MCF 10A (cell line): ENCODE measurements at regions of chr3 and their contacts with region 1.

Region 1: DNA sequence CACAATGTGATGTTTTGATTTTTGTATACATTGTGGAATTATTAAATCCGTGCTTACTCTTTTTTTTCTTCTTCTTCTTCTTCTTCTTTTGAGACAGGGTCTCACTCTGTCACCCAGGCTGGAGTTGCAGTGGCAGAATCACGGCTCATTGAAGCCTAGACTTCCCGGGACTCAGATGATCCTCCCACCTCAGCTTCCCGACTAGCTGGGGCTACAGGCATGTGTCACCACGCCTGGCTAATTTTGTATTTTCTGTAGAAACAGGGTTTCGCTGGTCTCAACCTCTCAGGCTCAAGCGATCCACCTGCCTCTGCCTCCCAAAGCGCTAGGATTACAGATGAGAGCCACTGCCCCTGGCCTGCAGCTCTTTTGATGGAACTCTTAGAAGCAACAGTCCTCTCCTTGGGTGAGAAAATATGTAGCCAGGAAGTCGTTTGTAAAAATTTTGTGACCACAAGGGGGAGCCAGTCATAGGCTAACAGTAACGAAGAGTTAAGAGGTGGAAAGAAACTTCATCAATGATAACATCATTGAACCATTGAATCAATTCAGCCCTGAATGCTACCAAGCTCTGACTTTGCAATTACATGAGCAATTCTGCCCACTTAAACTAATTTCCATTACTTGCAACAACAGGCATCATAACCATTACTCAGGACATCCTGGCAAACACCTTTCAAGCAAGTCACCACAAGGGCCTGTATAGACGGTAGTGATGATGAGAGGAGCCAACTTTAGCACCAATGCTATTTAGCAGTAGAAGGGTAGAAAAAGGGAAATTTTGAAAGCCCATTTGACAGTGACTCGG is 16.7 kb upstream of the CMTM7 start:
- DNase-seq: peak; percentile 79
- H3K4me3 Mint-ChIP-seq: no peak overlapping the region
- H3K27ac Mint-ChIP-seq: no peak overlapping the region
- H3K4me1 Mint-ChIP-seq: no peaks in the 10 kb centered on the region
- H3K27me3 Mint-ChIP-seq: no peaks in the 10 kb centered on the region
- CTCF ChIP-seq: peak; percentile 71

Region 2: DNA sequence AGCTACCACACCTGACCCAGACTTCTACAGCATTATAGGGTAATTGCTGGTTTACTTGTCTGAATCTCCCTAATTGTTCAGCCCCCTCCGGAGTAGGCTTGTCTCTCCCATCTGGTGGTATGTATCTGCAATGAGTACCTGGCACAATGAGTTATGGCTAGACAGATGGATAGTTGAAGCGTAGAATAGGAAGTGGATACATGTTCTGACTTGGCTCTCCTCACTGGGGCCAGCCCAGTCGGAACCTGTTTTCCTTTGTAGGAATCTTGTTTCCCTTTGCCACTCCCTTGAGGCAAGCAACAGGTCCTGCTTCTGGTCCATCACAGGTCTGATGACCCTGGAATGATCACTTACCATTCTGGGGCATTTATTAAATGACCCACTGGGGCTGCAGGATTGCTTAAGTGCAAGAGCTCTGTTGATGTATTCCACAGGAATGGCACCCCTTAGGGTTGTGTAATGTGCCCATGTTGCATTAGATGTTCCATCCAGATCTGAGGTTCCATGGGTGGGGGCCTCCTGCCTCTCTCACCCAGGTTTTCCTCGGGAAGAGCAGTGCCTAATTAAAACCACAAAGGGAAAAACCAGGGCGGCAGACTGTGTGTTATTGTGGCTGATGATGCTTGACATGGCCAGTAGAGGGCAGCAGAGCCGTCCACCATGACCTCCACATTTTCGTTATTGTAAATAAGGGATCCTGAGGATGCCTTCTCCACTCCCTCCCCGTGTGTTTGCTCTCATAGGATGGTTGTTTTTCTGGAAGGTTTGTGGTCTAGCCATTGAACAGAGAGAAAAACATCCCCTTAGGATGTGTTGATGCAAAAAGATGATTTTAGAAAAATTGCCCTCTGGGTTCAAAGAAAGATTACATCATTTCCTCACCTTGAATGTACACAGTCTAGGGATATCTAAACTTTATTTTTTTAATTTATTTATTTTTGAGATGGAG is 78.5 kb before region 1 on chr3:
- CTCF ChIA-PET with region 1: interaction called, 20 read pairs
- POLR2A ChIA-PET with region 1: no interaction called
- intact Hi-C with region 1: no loop called
- DNase-seq: peak; percentile 70
- H3K4me3 Mint-ChIP-seq: no peak overlapping the region
- H3K27ac Mint-ChIP-seq: no peak overlapping the region
- H3K4me1 Mint-ChIP-seq: peaks cover 9% of the 10 kb centered on the region
- H3K27me3 Mint-ChIP-seq: no peaks in the 10 kb centered on the region
- CTCF ChIP-seq: peak; percentile 91

Region 3: GRCh38 chr3:32391643-32392535 is 16.9 kb after region 1 on chr3 and contains the start of gene CMTM7:
- CTCF ChIA-PET with region 1: interaction called, 34 read pairs
- POLR2A ChIA-PET with region 1: interaction called, 3 read pairs
- intact Hi-C with region 1: no loop called
- DNase-seq: peak; percentile 67
- H3K4me3 Mint-ChIP-seq: peak within 1 kb of the TSS; percentile 80
- H3K27ac Mint-ChIP-seq: peak within 1 kb of the TSS; percentile 20
- H3K4me1 Mint-ChIP-seq: peaks cover 6% of the 10 kb centered on the region
- H3K27me3 Mint-ChIP-seq: no peaks in the 10 kb centered on the region
- CTCF ChIP-seq: no peak
- total RNA-seq, gene CMTM7: 9.7 and 14.3 TPM in 2 replicates

Region 4: DNA sequence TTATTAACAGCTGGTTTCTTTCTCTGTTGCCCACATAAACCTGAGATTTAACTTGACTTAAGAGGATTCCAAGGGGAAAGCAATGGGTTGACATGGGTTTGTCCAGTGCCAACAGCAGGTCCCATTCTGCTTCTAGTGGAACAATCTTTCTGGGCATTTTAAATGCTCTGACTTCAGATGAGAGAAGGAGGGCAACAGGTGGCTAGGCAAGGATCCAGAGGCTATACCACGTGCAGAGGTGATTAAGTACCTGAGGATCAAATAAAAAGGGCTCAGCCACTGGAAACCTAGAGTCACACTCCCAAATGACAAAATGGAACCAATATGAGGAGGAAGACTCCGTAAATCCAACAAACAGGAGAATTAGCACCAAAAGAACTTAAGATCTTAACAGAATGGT is 99.2 kb after region 1 on chr3:
- CTCF ChIA-PET with region 1: interaction called, 108 read pairs
- POLR2A ChIA-PET with region 1: no interaction called
- intact Hi-C with region 1: no loop called
- DNase-seq: no peak
- H3K4me3 Mint-ChIP-seq: no peak overlapping the region
- H3K27ac Mint-ChIP-seq: no peak overlapping the region
- H3K4me1 Mint-ChIP-seq: peaks cover 16% of the 10 kb centered on the region
- H3K27me3 Mint-ChIP-seq: no peaks in the 10 kb centered on the region
- CTCF ChIP-seq: no peak

Region 5: GRCh38 chr3:32667122-32667521 is 292.1 kb after region 1 on chr3:
- CTCF ChIA-PET with region 1: interaction called, 4 read pairs
- POLR2A ChIA-PET with region 1: no interaction called
- intact Hi-C with region 1: loop called (anchors 5 kb)
- DNase-seq: no peak
- H3K4me3 Mint-ChIP-seq: no peak overlapping the region
- H3K27ac Mint-ChIP-seq: no peak overlapping the region
- H3K4me1 Mint-ChIP-seq: no peaks in the 10 kb centered on the region
- H3K27me3 Mint-ChIP-seq: peaks cover 30% of the 10 kb centered on the region
- CTCF ChIP-seq: no peak